Activated naive CD8-positive, alpha-beta T cell treated with anti-CD3 and anti-CD28 coated beads, Interleukin-2, amount 10 ng/mL, durations not matched to agents 7 days and 5 days (primary cell): ENCODE measurements at regions of chr1 and their contacts with region 1.

Region 1: GRCh38 chr1:154760469-154760933 is 109.6 kb downstream of the KCNN3 start:
- DNase-seq: peak; percentile 94
- ATAC-seq: peak; percentile 89
- H3K4me3 Mint-ChIP-seq: peak overlapping the region; percentile 66
- H3K27ac Mint-ChIP-seq: peak overlapping the region; percentile 67
- H3K4me1 Mint-ChIP-seq: peaks cover 35% of the 10 kb centered on the region
- H3K27me3 Mint-ChIP-seq: peaks cover 9% of the 10 kb centered on the region

Region 2: DNA sequence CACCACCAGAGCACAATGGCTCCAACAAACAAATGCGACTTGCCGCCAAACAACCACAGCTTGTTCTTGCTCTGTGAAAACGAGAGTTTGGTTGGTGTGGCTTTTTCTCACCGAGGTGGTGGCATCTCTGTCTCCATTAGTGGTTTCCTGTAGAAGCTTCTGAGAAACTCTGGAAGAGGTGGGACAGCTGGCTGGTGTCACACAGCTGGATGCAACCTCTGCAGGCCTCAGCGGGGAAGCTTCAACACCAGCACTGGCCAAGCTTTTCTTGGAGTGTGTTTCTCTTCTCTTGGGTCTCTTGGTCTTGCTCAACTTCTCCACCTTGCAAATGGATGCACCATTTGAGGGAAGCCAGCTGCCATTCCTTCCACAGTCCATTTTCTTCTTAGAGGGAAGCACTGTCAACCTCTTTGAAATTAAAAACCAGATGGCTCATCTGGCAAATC is 15.2 kb before region 1 on chr1:
- POLR2A ChIA-PET with region 1: interaction called, 12 read pairs
- DNase-seq: peak; percentile 69
- ATAC-seq: peak; percentile 42
- H3K4me3 Mint-ChIP-seq: peak overlapping the region; percentile 54
- H3K27ac Mint-ChIP-seq: peak overlapping the region; percentile 58
- H3K4me1 Mint-ChIP-seq: peaks cover 53% of the 10 kb centered on the region
- H3K27me3 Mint-ChIP-seq: peaks cover 28% of the 10 kb centered on the region

Region 3: DNA sequence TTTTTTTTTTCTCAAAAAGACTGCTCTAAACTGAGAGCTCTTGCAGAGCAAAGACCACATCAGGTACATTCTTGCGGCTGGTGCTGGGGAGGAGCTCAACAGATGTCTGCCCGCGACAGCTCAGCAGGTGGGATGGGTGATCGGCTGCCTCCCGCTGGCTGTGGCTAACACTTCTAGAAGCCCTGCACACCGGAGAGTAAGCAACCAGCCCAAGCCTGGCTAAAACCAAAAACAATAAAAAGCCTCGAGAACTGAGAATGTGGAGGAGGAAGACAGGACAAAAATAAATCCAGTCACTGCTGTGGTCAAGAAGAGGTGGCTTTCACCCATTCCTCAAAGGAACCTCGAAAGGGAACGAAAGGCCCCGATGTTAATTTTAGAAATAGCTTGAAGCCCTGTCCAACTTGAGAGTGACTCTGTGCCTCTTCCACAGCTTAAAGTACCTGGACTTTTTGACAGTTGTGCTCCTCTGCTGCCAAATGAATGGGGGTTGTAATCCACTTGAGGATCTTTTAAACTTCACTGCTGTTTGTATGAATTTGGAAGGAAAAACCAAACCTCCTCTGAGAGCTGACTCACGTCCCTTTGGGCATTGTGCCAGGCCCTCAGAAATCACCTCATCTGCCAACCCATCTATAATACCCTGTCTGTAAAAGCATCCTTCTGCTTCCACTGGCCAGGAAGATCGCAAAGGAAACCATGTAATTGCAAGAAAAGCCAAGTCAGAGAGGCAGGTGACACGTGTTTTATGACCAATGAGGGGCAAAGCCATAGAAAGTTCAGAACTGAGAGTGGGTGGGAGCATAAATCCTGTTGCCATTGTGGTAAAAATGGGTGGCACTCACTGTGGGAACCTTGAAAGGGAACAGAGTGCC is 31.0 kb after region 1 on chr1:
- POLR2A ChIA-PET with region 1: interaction called, 13 read pairs
- DNase-seq: peak; percentile 79
- ATAC-seq: peak; percentile 98
- H3K4me3 Mint-ChIP-seq: peak overlapping the region; percentile 79
- H3K27ac Mint-ChIP-seq: peak overlapping the region; percentile 91
- H3K4me1 Mint-ChIP-seq: peaks cover 33% of the 10 kb centered on the region
- H3K27me3 Mint-ChIP-seq: peaks cover 8% of the 10 kb centered on the region

Region 4: GRCh38 chr1:154802982-154803920 is 42.8 kb after region 1 on chr1:
- POLR2A ChIA-PET with region 1: no interaction called
- DNase-seq: no peak
- ATAC-seq: no peak
- H3K4me3 Mint-ChIP-seq: no peak overlapping the region
- H3K27ac Mint-ChIP-seq: no peak overlapping the region
- H3K4me1 Mint-ChIP-seq: peaks cover 3% of the 10 kb centered on the region
- H3K27me3 Mint-ChIP-seq: peaks cover 22% of the 10 kb centered on the region